ENCODE measurements at regions of chr6 and their contacts with region 1.

Region 1: DNA sequence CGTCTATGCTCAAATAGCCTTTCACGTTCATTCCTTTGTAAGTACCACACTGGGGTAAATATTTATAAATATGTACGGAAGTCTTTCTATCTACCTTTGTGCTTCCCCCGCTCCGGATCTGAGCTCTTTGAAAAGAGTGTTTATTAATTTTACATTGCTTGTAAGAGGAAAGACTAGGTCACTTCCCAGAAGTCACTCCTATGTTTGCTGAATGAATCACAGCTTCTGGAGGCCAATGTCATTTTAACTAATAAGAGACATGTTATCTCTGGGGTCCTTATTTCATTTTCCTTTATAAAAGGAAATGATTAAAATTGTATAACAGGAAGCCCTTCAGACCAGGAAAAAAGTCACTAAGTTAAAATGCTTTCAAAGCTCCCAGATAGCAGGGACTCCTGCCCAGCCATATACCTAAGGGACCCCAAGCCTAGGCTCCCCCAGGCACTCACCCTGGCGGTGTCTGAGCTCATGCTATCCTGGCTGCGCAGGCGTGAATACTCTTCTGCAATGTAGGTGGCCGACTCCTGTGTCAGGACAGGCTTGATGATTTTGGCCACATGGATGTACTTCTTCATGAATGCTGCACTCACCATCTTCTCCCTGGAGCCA is 12.6 kb downstream of the MCM3 start:
- DNase-seq: no peak
- ATAC-seq: no peak
- H3K4me3 ChIP-seq: no peak overlapping the region
- H3K27ac ChIP-seq: no peak overlapping the region
- H3K4me1 ChIP-seq: no peaks in the 10 kb centered on the region
- H3K27me3 ChIP-seq: no peaks in the 10 kb centered on the region
- CTCF ChIP-seq: no peak

Region 2: GRCh38 chr6:52361945-52362442 is 90.0 kb after region 1 on chr6 and contains the start of gene PAQR8:
- CTCF ChIA-PET with region 1: no interaction called
- POLR2A ChIA-PET with region 1: no interaction called
- in situ Hi-C with region 1: no loop called
- intact Hi-C with region 1: no loop called
- DNase-seq: no peak
- ATAC-seq: peak; percentile 96
- H3K4me3 ChIP-seq: peak within 1 kb of the TSS; percentile 77 to 81
- H3K27ac ChIP-seq: peak within 1 kb of the TSS; percentile 73
- H3K4me1 ChIP-seq: peaks cover 8% of the 10 kb centered on the region
- H3K27me3 ChIP-seq: no peaks in the 10 kb centered on the region; the same call in 1 of the 2 replicates
- CTCF ChIP-seq: no peak
- total RNA-seq, gene PAQR8: 3.6 TPM

Region 3: DNA sequence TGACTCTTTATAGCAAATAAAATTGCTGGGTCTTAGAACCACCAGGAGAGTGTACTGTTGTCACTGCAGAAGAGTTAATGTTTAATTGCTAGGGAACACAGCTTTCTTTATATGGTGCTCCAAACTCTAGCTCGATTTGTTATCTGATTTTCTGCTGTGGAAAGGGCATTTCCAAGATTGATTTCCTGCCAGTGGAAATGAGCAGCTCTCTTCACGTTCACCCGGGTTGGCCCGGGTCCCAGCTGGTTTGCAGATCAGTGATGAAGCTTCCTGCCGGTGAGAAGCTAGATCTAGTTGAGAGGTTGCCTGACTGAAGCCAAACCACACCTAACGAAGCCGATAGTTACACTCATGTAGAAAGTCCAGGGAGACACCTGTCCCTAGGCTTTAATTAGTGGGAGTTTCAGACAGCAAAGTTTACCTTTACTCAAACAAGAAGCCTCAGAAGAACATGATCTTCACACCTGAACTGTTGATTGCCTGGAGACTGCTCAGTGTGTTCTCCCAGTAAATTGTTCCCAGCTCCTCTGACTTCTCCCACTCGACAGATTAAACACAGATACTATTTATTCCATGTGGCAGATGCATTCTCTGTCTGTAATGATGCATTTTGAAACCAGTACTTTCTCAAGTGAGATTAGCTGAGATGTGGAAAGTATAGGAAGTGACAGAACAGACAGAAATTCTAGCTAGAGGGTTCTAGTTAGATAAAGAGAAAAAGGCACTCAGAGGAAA is 117.8 kb after region 1 on chr6:
- CTCF ChIA-PET with region 1: no interaction called
- POLR2A ChIA-PET with region 1: interaction called, 12 read pairs
- in situ Hi-C with region 1: no loop called
- intact Hi-C with region 1: no loop called
- DNase-seq: no peak
- ATAC-seq: peak; percentile 75
- H3K4me3 ChIP-seq: peak overlapping the region in 1 of 2 experiments; percentile 19; a peak in 1 of 4 replicates
- H3K27ac ChIP-seq: peak overlapping the region; percentile 81
- H3K4me1 ChIP-seq: peaks cover 15% of the 10 kb centered on the region
- H3K27me3 ChIP-seq: no peaks in the 10 kb centered on the region
- CTCF ChIP-seq: no peak

Region 4: GRCh38 chr6:52650941-52651340 is 379.0 kb after region 1 on chr6:
- CTCF ChIA-PET with region 1: no interaction called
- POLR2A ChIA-PET with region 1: no interaction called
- in situ Hi-C with region 1: no loop called
- intact Hi-C with region 1: no loop called
- DNase-seq: no peak
- ATAC-seq: no peak
- H3K4me3 ChIP-seq: no peak overlapping the region
- H3K27ac ChIP-seq: no peak overlapping the region
- H3K4me1 ChIP-seq: no peaks in the 10 kb centered on the region
- H3K27me3 ChIP-seq: no peaks in the 10 kb centered on the region; the same call in 1 of the 2 replicates
- CTCF ChIP-seq: no peak

Region 5: GRCh38 chr6:53294095-53294494 is 1022.1 kb after region 1 on chr6:
- CTCF ChIA-PET with region 1: no interaction called
- POLR2A ChIA-PET with region 1: interaction called, 10 read pairs
- in situ Hi-C with region 1: no loop called
- intact Hi-C with region 1: no loop called
- DNase-seq: no peak
- ATAC-seq: no peak; the same call in 1 of the 2 replicates
- H3K4me3 ChIP-seq: no peak overlapping the region
- H3K27ac ChIP-seq: no peak overlapping the region
- H3K4me1 ChIP-seq: peaks cover 28% of the 10 kb centered on the region
- H3K27me3 ChIP-seq: no peaks in the 10 kb centered on the region
- CTCF ChIP-seq: peak; percentile 74